ENCODE measurements at regions of chr9 and their contacts with region 1.

Region 1: GRCh38 chr9:17031546-17031945 is 103.3 kb upstream of the CNTLN start:
- DNase-seq: no peak

Region 2: GRCh38 chr9:16458696-16459420 is 572.7 kb before region 1 on chr9:
- intact Hi-C with region 1: loop called in 1 of 2 experiments (anchors 5 kb)
- DNase-seq: no peak

Region 3: GRCh38 chr9:16992138-16992537 is 39.4 kb before region 1 on chr9:
- intact Hi-C with region 1: loop called in 1 of 2 experiments (anchors 2 kb)
- DNase-seq: no peak

Region 4: DNA sequence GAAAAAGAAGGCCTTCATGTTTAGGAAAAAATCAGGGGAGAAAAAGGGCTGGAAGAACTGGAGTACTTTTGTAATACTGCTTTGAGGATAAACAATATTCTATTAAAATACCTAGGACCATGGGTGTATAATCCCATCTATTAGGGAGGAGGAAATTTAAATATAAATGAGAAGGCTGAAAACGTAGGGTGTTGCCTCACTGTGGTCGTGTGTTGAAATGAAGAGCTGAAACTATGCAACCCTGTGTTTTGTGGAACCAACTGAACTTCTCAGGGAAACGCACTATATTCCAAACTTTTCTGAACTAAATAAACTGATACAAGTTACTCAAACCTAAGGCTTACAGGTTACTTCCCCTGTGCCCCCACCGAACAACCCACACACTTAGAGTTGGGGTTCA is 98.7 kb after region 1 on chr9:
- intact Hi-C with region 1: no loop called
- DNase-seq: no peak

Measured in posterior vena cava (tissue), 2 donors.